Activated CD4-positive, alpha-beta memory T cell treated with anti-CD3 and anti-CD28 coated beads, Interleukin-2, amount 10 ng/mL, durations not matched to agents 7 days and 5 days (primary cell): ENCODE measurements at regions of chr2 and their contacts with region 1.

Region 1: DNA sequence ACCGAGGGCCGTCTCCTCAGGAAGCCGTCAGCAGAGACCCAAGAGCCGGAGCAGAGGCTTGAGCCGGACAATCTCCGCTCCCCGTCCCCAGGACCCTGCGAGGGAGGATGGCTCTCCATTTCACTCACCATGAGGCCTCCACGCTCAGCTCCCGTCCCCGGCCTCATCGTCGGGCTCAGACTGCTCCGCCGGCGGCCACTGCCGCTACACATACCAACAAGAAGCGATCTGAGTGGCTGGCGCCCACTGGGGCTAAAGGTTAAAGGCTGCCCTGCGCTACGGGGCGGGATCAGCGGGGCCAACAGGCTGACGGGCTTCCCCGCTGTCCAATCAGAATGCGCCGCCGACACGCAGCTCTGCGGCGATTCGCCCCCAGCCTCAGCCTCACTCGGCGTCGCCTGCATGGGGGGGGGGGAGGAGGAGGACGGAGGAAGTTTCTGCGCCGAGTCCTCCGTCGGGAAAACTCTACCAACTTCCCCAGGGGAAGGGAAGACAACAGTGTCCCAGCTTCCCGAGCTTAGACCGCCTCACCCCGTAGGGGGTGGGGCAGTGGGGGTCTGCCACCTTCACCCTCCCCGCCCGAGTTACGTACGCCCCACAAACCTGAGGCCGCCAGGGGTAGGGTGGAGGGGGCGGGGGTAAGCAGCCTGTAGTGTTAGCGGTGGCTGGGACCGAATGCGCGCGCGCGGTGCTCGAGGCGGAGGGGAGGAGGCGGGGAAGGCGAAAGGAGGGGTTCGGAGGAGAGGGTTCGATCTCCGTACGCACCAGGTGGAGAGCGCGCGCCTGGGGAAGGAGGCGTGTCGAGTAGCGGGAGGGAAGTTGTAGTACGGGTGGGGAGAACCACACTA is at the start of gene PRPF40A:
- DNase-seq: peak; percentile 99
- H3K4me3 Mint-ChIP-seq: peak within 1 kb of the TSS; percentile 92
- H3K27ac Mint-ChIP-seq: peak within 1 kb of the TSS; percentile 92
- H3K4me1 Mint-ChIP-seq: peaks cover 63% of the 10 kb centered on the region
- H3K27me3 Mint-ChIP-seq: no peaks in the 10 kb centered on the region
- total RNA-seq, gene PRPF40A: 109 to 113 TPM

Region 2: GRCh38 chr2:152175458-152176325 is 541.8 kb before region 1 on chr2 and contains the start of gene STAM2:
- CTCF ChIA-PET with region 1: interaction called, 11 read pairs
- POLR2A ChIA-PET with region 1: interaction called, 17 read pairs
- DNase-seq: peak; percentile 93
- H3K4me3 Mint-ChIP-seq: peak within 1 kb of the TSS; percentile 98
- H3K27ac Mint-ChIP-seq: peak within 1 kb of the TSS; percentile 97
- H3K4me1 Mint-ChIP-seq: peaks cover 32% of the 10 kb centered on the region
- H3K27me3 Mint-ChIP-seq: peaks cover 6% of the 10 kb centered on the region
- total RNA-seq, gene STAM2: 13.8 to 16.2 TPM

Region 3: DNA sequence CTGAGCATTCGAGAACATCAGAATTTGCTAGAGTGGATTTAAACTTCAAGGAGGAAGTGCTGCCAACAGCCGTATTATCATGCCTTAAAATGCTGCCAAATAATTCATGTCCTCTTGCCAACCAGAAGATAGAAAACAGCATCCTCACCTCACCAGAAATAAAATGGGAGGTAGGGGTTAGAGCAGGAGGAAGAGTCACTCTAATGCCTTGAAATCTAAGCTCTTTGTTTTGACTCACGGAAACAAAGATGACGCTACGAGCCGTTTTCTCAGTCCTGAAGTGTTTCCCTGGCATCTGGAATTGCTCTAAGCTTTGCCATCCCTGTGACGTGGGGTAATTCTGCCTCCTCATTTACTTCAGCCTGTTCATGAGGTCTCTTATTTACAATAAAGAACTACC is 97.2 kb before region 1 on chr2:
- CTCF ChIA-PET with region 1: no interaction called
- POLR2A ChIA-PET with region 1: no interaction called
- DNase-seq: no peak
- H3K4me3 Mint-ChIP-seq: no peak overlapping the region
- H3K27ac Mint-ChIP-seq: no peak overlapping the region
- H3K4me1 Mint-ChIP-seq: peaks cover 1% of the 10 kb centered on the region
- H3K27me3 Mint-ChIP-seq: peaks cover 2% of the 10 kb centered on the region

Region 4: GRCh38 chr2:152676461-152676860 is 41.0 kb before region 1 on chr2:
- CTCF ChIA-PET with region 1: interaction called, 4 read pairs
- POLR2A ChIA-PET with region 1: interaction called, 12 read pairs
- DNase-seq: no peak
- H3K4me3 Mint-ChIP-seq: no peak overlapping the region
- H3K27ac Mint-ChIP-seq: no peak overlapping the region
- H3K4me1 Mint-ChIP-seq: peaks cover 8% of the 10 kb centered on the region
- H3K27me3 Mint-ChIP-seq: no peaks in the 10 kb centered on the region

Region 5: GRCh38 chr2:152694161-152694661 is 23.2 kb before region 1 on chr2:
- CTCF ChIA-PET with region 1: interaction called, 40 read pairs
- POLR2A ChIA-PET with region 1: interaction called, 63 read pairs
- DNase-seq: peak; percentile 61
- H3K4me3 Mint-ChIP-seq: peak overlapping the region; percentile 82
- H3K27ac Mint-ChIP-seq: peak overlapping the region; percentile 95
- H3K4me1 Mint-ChIP-seq: peaks cover 34% of the 10 kb centered on the region
- H3K27me3 Mint-ChIP-seq: no peaks in the 10 kb centered on the region

Region 6: GRCh38 chr2:152730591-152731303 is 13.3 kb after region 1 on chr2:
- CTCF ChIA-PET with region 1: interaction called, 9 read pairs
- POLR2A ChIA-PET with region 1: interaction called, 82 read pairs
- DNase-seq: peak; percentile 65
- H3K4me3 Mint-ChIP-seq: no peak overlapping the region
- H3K27ac Mint-ChIP-seq: peak overlapping the region; percentile 65
- H3K4me1 Mint-ChIP-seq: peaks cover 31% of the 10 kb centered on the region
- H3K27me3 Mint-ChIP-seq: no peaks in the 10 kb centered on the region

Region 7: DNA sequence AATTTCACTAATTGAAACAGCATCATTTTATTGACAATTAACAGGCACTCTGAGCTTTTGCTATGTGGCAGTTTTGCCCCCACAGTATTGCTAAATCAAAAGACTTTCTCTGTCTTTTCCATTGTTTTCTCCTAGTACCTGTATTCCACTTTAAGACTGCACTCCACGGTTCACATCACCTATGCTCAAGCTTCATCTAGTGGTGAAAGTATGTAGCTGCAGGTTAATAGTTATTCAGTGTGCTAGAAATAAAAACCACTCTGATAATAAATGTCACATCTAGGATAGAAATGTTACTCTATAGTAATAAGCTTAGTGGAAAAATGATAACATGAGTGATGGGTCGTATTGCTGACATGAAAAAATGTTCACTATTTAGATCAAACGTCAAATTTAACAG is 25.6 kb after region 1 on chr2:
- CTCF ChIA-PET with region 1: interaction called, 25 read pairs
- POLR2A ChIA-PET with region 1: interaction called, 14 read pairs
- DNase-seq: no peak
- H3K4me3 Mint-ChIP-seq: no peak overlapping the region
- H3K27ac Mint-ChIP-seq: no peak overlapping the region
- H3K4me1 Mint-ChIP-seq: no peaks in the 10 kb centered on the region
- H3K27me3 Mint-ChIP-seq: no peaks in the 10 kb centered on the region